Activated CD4-positive, alpha-beta T cell treated with anti-CD3 and anti-CD28 coated beads for 36 hours (primary cell): ENCODE measurements at regions of chr22 and their contacts with region 1.

Region 1: DNA sequence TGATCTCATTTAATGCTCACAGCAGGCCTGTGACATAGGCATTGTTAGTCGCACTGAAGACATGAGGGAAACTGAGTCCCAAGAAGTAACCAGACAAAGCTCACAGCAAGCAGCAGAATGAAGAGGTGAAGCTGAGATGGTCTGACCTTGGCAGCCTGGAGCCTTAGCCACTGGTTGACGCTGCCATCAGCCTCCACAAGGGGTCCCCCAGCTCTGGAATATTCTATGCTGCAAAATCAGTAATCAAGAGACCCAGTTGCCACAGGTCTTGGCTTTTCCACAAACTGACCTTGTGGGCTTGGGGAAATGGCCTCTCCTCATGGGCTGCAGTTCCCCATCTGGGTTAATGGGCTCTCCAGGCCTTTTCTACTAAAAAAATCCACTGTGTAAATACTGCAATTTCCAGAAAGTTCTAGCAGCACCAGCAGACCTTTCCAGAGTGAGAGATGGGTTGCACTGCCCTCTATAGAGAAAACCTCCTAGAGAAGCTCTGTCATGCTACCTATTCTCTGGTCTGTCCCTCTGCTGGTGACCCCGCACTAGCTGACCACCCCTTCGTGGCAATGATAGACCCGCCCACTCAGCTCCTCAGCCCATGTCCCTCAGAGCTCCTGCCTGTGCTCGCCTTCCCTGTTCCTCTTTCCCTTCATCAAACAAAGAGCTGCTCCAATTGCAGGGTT is 22.6 kb upstream of the ISX start:
- DNase-seq: peak; percentile 25
- ATAC-seq: no peak
- H3K4me3 Mint-ChIP-seq: no peak overlapping the region
- H3K27ac Mint-ChIP-seq: no peak overlapping the region
- H3K4me1 Mint-ChIP-seq: no peaks in the 10 kb centered on the region
- H3K27me3 Mint-ChIP-seq: peaks cover 8% of the 10 kb centered on the region

Region 2: DNA sequence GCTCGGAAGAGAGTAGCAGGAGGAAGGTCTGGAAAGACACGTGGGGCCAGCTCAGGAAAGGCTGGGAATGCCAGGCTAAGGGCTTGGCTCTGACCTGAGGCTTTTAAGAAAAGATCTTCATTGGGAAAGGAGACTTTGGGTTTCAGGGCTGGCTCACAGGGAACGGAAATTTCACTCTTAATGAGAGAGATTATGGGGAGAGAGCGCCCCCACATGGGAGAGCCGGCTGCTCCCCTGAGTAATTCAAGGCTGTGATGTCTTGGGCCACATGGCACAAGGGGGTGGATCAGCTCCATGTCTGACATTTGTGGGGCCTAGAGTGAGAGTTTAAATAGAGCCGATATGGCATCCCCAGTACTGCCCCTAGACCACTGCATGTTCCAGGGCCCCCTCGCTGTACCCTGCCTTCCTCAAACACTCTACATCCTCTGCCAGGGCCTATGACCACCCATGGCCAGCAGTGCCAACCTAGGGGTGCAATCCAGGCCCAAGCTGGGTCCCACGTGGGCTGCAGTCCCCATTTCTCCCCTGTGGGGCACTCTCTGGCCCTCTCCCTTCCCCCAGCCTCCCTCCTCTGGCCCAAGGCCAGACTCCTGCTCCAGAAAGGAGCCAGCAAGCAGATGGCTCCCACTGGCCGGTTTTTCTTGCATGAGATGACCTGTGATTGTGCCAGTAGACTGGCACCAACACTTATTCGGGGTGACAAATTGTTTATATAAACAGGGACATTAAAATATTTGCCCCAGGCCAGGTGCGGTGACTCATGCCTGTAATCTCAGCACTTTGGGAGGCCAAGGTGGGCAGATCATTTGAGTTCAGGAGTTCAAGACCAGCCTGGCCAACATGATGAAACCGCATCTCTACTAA is 97.7 kb after region 1 on chr22:
- CTCF ChIA-PET with region 1: interaction called, 3 read pairs
- POLR2A ChIA-PET with region 1: no interaction called
- intact Hi-C with region 1: loop called in 1 of 2 experiments (anchors 10 kb)
- DNase-seq: peak; percentile 36
- ATAC-seq: no peak
- H3K4me3 Mint-ChIP-seq: no peak overlapping the region
- H3K27ac Mint-ChIP-seq: no peak overlapping the region
- H3K4me1 Mint-ChIP-seq: no peaks in the 10 kb centered on the region
- H3K27me3 Mint-ChIP-seq: peaks cover 6% of the 10 kb centered on the region

Region 3: GRCh38 chr22:35150183-35151107 is 107.1 kb after region 1 on chr22:
- CTCF ChIA-PET with region 1: interaction called, 4 read pairs
- POLR2A ChIA-PET with region 1: no interaction called
- intact Hi-C with region 1: loop called (anchors 1 to 10 kb)
- DNase-seq: peak; percentile 81
- ATAC-seq: peak; percentile 72
- H3K4me3 Mint-ChIP-seq: no peak overlapping the region
- H3K27ac Mint-ChIP-seq: no peak overlapping the region
- H3K4me1 Mint-ChIP-seq: no peaks in the 10 kb centered on the region
- H3K27me3 Mint-ChIP-seq: peaks cover 20% of the 10 kb centered on the region

Region 4: GRCh38 chr22:35231585-35232084 is 188.2 kb after region 1 on chr22:
- CTCF ChIA-PET with region 1: interaction called, 3 read pairs
- POLR2A ChIA-PET with region 1: no interaction called
- intact Hi-C with region 1: loop called (anchors 2 to 10 kb)
- DNase-seq: peak; percentile 90
- ATAC-seq: peak; percentile 86
- H3K4me3 Mint-ChIP-seq: no peak overlapping the region
- H3K27ac Mint-ChIP-seq: no peak overlapping the region
- H3K4me1 Mint-ChIP-seq: no peaks in the 10 kb centered on the region
- H3K27me3 Mint-ChIP-seq: peaks cover 21% of the 10 kb centered on the region